K562 (cell line): ENCODE measurements at regions of chr7 and their contacts with region 1.

Region 1: GRCh38 chr7:156544919-156545723 is 95.5 kb upstream of the RNF32 start:
- DNase-seq: peak in 1 of 4 experiments; percentile 27
- ATAC-seq: peak; percentile 61
- H3K4me3 ChIP-seq: no peak overlapping the region
- H3K27ac ChIP-seq: no peak overlapping the region
- H3K4me1 ChIP-seq: peaks cover 0 to 4% of the 10 kb centered on the region in 2 experiments; a peak in 4 of 5 replicates
- H3K27me3 ChIP-seq: peaks cover 44 to 64% of the 10 kb centered on the region in 2 experiments
- CTCF ChIP-seq: peak; percentile 7 to 44 (median 29); a peak in 4 of 6 replicates
- EP300 ChIP-seq: no peak
- POLR2A ChIP-seq: no peak
- RAD21 ChIP-seq: peak in 1 of 2 experiments; percentile 52; a peak in 2 of 4 replicates

Region 2: GRCh38 chr7:156522801-156523200 is 22.3 kb before region 1 on chr7:
- CTCF ChIA-PET with region 1: no interaction called
- POLR2A ChIA-PET with region 1: no interaction called
- in situ Hi-C with region 1: no loop called
- intact Hi-C with region 1: loop called (anchors 1 kb)
- DNase-seq: no peak
- ATAC-seq: no peak; the same call in 2 of the 3 replicates
- H3K4me3 ChIP-seq: no peak overlapping the region
- H3K27ac ChIP-seq: no peak overlapping the region
- H3K4me1 ChIP-seq: peaks cover 0 to 3% of the 10 kb centered on the region in 2 experiments; a peak in 3 of 5 replicates
- H3K27me3 ChIP-seq: peaks cover 35 to 56% of the 10 kb centered on the region in 2 experiments
- CTCF ChIP-seq: no peak
- EP300 ChIP-seq: no peak
- POLR2A ChIP-seq: no peak
- RAD21 ChIP-seq: no peak

Region 3: GRCh38 chr7:156556083-156556482 is 11.0 kb after region 1 on chr7:
- CTCF ChIA-PET with region 1: no interaction called
- POLR2A ChIA-PET with region 1: no interaction called
- in situ Hi-C with region 1: no loop called
- intact Hi-C with region 1: no loop called
- DNase-seq: no peak
- ATAC-seq: no peak
- H3K4me3 ChIP-seq: no peak overlapping the region
- H3K27ac ChIP-seq: no peak overlapping the region
- H3K4me1 ChIP-seq: no peaks in the 10 kb centered on the region
- H3K27me3 ChIP-seq: peaks cover 2 to 25% of the 10 kb centered on the region in 2 experiments; a peak in 4 of 5 replicates
- CTCF ChIP-seq: no peak
- EP300 ChIP-seq: no peak
- POLR2A ChIP-seq: no peak
- RAD21 ChIP-seq: no peak

Region 4: DNA sequence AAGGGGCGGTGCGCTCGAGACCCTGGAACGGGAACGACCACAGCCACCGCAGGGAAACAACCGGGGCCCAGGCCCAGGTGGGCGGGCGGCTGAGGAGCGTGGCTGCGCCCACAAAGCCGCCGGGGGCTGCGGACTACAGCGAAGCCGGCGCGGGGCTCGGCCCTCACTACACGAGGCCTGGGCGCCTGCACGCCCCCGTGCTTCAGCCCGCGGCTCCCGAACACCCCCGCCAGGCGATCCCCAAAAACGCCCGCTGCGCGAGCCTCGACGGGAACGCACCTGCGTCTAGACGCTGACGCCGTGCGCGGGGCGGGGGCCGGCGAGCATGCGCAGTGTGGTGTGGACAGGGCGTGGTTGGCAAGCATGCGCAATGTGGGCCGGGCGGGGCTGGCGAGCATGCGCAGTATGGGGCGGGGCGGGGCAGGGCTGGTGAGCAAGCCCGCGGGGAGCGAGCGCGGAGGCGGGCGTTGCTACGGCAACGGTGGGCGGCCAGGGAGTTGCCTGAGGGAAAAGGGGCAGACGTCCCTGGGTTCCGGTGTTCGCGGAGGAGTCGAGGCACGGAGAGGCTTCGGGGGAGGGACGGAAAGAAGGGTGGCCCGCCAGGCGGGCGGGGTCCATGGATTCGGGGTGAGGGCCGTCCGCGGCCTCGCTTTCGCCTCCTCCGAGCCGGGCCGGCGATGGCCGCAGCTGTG is 95.3 kb after region 1 on chr7 and contains the start of gene RNF32:
- CTCF ChIA-PET with region 1: no interaction called
- POLR2A ChIA-PET with region 1: no interaction called
- in situ Hi-C with region 1: no loop called
- intact Hi-C with region 1: loop called (anchors 10 kb)
- DNase-seq: peak; percentile 100
- ATAC-seq: peak; percentile 80
- H3K4me3 ChIP-seq: peak within 1 kb of the TSS; percentile 71
- H3K27ac ChIP-seq: peak within 1 kb of the TSS; percentile 92
- H3K4me1 ChIP-seq: peaks cover 5 to 20% of the 10 kb centered on the region in 2 experiments; a peak in 4 of 5 replicates
- H3K27me3 ChIP-seq: no peaks in the 10 kb centered on the region
- CTCF ChIP-seq: peak in 1 of 3 experiments; percentile 28; a peak in 2 of 6 replicates
- EP300 ChIP-seq: peak; percentile 9; the same call in 1 of the 2 replicates
- POLR2A ChIP-seq: peak; percentile 90
- RAD21 ChIP-seq: 0 out of 4 replicates have a peak, but pooled peaks of 1 of the 2 experiments have one; percentile 3
- polyA plus RNA-seq, gene RNF32: 3.2 to 3.7 TPM

Region 5: DNA sequence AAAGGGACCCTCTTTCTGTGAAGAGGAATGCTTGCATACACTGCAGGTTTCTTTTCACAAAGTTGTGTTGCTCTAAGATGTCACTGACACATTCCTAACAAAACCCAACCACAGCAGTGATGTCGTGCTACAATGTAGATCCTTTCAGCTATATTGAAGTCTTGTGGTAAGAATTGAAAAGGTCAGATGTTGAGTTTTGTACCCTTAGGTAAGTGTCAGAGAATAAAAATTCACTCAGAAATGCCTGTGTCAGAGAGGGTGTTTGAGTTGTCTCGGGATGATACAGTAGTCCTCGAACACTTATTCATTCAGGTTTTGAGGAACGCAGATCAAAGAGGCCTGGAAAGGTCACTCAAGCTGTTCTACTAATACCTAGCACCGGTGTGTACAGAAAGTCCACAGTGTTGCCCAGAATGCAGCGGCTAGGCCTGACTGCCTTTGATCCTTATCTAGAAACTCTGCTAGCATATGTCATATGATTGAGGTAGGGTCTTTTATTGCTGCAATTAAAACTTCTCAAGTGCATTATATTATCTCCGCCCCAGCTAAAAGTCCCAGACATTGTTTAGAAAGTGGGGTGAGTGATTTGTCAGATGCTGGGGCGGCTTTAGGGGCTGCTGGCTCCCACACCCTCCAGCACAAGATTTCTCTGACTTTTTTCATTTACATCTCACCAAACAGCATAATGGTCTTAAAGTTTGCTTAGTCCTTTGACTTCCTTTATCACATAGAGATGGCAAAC is 121.4 kb after region 1 on chr7:
- CTCF ChIA-PET with region 1: no interaction called
- POLR2A ChIA-PET with region 1: no interaction called
- in situ Hi-C with region 1: no loop called
- intact Hi-C with region 1: no loop called
- DNase-seq: no peak
- ATAC-seq: peak; percentile 17; the same call in 1 of the 3 replicates
- H3K4me3 ChIP-seq: no peak overlapping the region
- H3K27ac ChIP-seq: no peak overlapping the region
- H3K4me1 ChIP-seq: peaks cover 9 to 14% of the 10 kb centered on the region in 2 experiments; a peak in 4 of 5 replicates
- H3K27me3 ChIP-seq: no peaks in the 10 kb centered on the region
- CTCF ChIP-seq: no peak
- EP300 ChIP-seq: no peak
- POLR2A ChIP-seq: no peak
- RAD21 ChIP-seq: no peak

Region 6: GRCh38 chr7:156725077-156725476 is 180.0 kb after region 1 on chr7:
- CTCF ChIA-PET with region 1: no interaction called
- POLR2A ChIA-PET with region 1: no interaction called
- in situ Hi-C with region 1: no loop called
- intact Hi-C with region 1: no loop called
- DNase-seq: no peak
- ATAC-seq: no peak
- H3K4me3 ChIP-seq: no peak overlapping the region
- H3K27ac ChIP-seq: no peak overlapping the region
- H3K4me1 ChIP-seq: no peaks in the 10 kb centered on the region
- H3K27me3 ChIP-seq: no peaks in the 10 kb centered on the region
- CTCF ChIP-seq: no peak
- EP300 ChIP-seq: no peak
- POLR2A ChIP-seq: no peak
- RAD21 ChIP-seq: no peak